GM12878 (cell line): ENCODE measurements at regions of chr13 and their contacts with region 1.

Region 1: GRCh38 chr13:102460801-102461200 is 59.0 kb upstream of the FGF14 start:
- DNase-seq: no peak
- ATAC-seq: no peak
- H3K4me3 ChIP-seq: no peak overlapping the region
- H3K27ac ChIP-seq: no peak overlapping the region
- H3K4me1 ChIP-seq: no peaks in the 10 kb centered on the region
- H3K27me3 ChIP-seq: no peaks in the 10 kb centered on the region
- CTCF ChIP-seq: no peak
- EP300 ChIP-seq: no peak
- POLR2A ChIP-seq: no peak
- RAD21 ChIP-seq: no peak

Region 2: GRCh38 chr13:101942038-101942437 is 518.8 kb before region 1 on chr13:
- CTCF ChIA-PET with region 1: interaction called, 18 read pairs
- POLR2A ChIA-PET with region 1: no interaction called
- RAD21 ChIA-PET with region 1: interaction called, 5 read pairs
- SMC1A ChIA-PET with region 1: interaction called, 5 read pairs
- in situ Hi-C with region 1: loop called (anchors 10 kb)
- intact Hi-C with region 1: loop called (anchors 1 kb)
- DNase-seq: no peak
- ATAC-seq: peak; percentile 78
- H3K4me3 ChIP-seq: no peak overlapping the region
- H3K27ac ChIP-seq: no peak overlapping the region
- H3K4me1 ChIP-seq: no peaks in the 10 kb centered on the region
- H3K27me3 ChIP-seq: no peaks in the 10 kb centered on the region
- CTCF ChIP-seq: peak; percentile 62 to 63 (median 63)
- EP300 ChIP-seq: no peak
- POLR2A ChIP-seq: no peak
- RAD21 ChIP-seq: peak; percentile 72

Region 3: DNA sequence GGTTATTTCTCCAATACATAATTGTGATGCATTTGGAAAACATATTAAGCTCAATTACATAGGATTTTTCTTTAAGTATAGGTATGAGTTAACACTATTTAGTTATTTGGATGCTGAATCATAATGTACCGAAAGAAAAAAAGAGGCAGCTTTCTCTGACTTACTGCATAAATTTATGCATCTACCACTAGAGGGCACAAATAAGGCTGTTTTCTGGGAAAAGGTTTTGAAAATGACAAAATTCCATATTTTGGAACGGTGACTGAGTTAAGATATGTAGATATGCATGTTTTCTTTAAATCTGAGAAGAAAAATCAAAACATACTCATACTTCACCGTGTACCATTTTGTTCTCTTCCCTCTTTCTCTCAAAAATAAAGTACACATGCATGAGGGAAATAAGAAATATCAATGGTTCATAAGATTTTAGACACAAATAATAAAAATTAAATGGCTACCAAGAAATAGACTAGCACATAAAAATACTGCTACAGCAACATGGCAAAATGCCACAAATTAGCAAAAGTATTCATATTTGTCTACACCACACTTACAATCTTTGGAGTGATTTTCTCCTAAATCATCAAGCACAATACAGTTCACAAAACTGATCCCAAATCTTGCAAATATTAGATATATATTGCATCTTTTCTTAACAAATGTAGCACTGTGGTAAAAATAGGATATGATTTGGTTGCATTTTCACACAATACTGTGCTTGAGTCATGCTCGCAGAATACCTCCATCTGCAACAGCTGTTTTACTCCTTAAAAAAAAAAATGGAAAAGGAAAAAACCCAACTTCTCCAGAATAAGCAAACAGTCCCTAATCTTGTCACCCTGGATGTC is 319.0 kb before region 1 on chr13:
- CTCF ChIA-PET with region 1: interaction called, 33 read pairs
- POLR2A ChIA-PET with region 1: no interaction called
- RAD21 ChIA-PET with region 1: interaction called, 6 read pairs
- SMC1A ChIA-PET with region 1: interaction called, 5 read pairs
- in situ Hi-C with region 1: loop called (anchors 25 kb)
- intact Hi-C with region 1: loop called (anchors 1 kb)
- DNase-seq: no peak
- ATAC-seq: peak; percentile 45; the same call in 2 of the 3 replicates
- H3K4me3 ChIP-seq: no peak overlapping the region
- H3K27ac ChIP-seq: no peak overlapping the region
- H3K4me1 ChIP-seq: no peaks in the 10 kb centered on the region
- H3K27me3 ChIP-seq: no peaks in the 10 kb centered on the region
- CTCF ChIP-seq: peak; percentile 52 to 63 (median 55)
- EP300 ChIP-seq: no peak
- POLR2A ChIP-seq: no peak
- RAD21 ChIP-seq: peak; percentile 39

Region 4: DNA sequence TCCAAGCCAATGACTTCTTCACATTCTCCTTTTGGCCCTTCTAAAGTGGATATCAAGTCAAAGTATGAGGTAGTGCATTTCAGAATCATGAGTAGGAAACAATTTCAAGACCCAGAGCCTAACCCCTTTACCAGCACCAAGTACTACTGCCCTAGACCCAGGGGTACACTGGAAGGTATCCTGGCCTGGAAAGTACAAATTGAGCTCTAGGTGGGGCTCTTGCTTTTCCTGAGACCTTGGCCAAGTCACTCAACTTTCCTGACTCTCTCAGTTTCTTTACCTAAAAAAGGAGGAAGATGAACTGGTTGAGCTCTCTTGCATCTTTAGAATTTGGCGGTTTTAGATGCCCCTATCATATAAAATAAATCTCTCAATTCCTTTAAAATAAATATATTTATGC is 263.6 kb before region 1 on chr13:
- CTCF ChIA-PET with region 1: interaction called, 5 read pairs
- POLR2A ChIA-PET with region 1: no interaction called
- RAD21 ChIA-PET with region 1: interaction called, 4 read pairs
- SMC1A ChIA-PET with region 1: interaction called, 3 read pairs
- in situ Hi-C with region 1: no loop called
- intact Hi-C with region 1: loop called (anchors 2 kb)
- DNase-seq: no peak
- ATAC-seq: peak; percentile 52; the same call in 1 of the 3 replicates
- H3K4me3 ChIP-seq: no peak overlapping the region
- H3K27ac ChIP-seq: no peak overlapping the region
- H3K4me1 ChIP-seq: no peaks in the 10 kb centered on the region
- H3K27me3 ChIP-seq: no peaks in the 10 kb centered on the region
- CTCF ChIP-seq: peak in 2 of 3 experiments; percentile 9 to 15; a peak in 1 of 6 replicates
- EP300 ChIP-seq: no peak
- POLR2A ChIP-seq: no peak
- RAD21 ChIP-seq: 0 out of 2 replicates have a peak, but pooled peaks have one; percentile 32

Region 5: GRCh38 chr13:102234618-102235017 is 226.2 kb before region 1 on chr13:
- CTCF ChIA-PET with region 1: no interaction called
- POLR2A ChIA-PET with region 1: no interaction called
- RAD21 ChIA-PET with region 1: no interaction called
- SMC1A ChIA-PET with region 1: no interaction called
- in situ Hi-C with region 1: loop called (anchors 5 kb)
- intact Hi-C with region 1: no loop called
- DNase-seq: no peak
- ATAC-seq: no peak
- H3K4me3 ChIP-seq: no peak overlapping the region
- H3K27ac ChIP-seq: no peak overlapping the region
- H3K4me1 ChIP-seq: no peaks in the 10 kb centered on the region
- H3K27me3 ChIP-seq: no peaks in the 10 kb centered on the region; a peak in 1 of 4 replicates
- CTCF ChIP-seq: no peak
- EP300 ChIP-seq: no peak
- POLR2A ChIP-seq: no peak
- RAD21 ChIP-seq: no peak

Region 6: DNA sequence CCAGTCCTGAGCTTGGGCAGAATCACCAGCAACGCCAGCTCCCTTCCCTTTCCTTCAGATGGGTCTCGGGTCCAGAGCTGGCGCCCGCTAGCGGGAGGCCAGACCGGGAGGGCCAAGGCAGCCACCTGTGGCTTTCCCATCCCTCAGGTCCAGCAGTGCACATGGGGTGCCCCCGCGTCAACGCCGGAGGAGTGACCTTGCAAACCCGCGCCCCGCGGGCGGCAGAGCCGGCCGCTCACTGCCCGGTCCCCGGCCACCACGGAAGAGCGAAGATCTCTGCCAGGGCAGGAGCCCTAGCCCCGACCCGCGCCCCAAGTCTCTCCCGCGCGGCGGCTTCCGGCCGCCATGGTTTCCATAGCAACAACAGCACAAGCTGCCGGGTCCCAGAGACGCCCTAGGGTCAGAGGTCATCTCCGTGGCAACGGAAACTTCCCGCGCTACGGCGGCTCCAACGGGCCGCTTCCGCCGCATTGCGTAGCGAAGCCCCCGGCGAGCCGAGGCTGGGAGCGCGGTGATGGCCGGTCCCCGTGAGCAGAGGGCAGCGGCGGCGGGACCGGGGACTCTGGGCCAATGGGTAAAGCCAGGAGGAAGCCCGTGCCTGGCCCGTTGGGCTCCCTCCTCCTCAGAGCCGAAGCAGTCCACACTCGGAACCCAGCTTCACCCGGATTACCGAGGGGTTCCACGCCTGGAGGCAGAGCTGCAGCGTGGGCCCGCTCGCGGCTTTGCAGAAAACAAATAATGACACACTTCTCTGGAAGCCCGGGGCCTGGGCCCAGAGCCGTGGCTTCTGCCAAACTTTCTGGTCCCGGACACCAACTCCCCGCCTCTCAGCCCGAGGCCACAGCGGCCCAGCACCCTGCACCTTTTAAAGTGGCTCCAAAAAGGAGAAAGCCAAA is 66.4 kb before region 1 on chr13:
- CTCF ChIA-PET with region 1: interaction called, 4 read pairs
- POLR2A ChIA-PET with region 1: no interaction called
- RAD21 ChIA-PET with region 1: interaction called, 5 read pairs
- SMC1A ChIA-PET with region 1: no interaction called
- in situ Hi-C with region 1: no loop called
- intact Hi-C with region 1: loop called (anchors 5 kb)
- DNase-seq: peak; percentile 47
- ATAC-seq: peak; percentile 94
- H3K4me3 ChIP-seq: peak overlapping the region; percentile 81
- H3K27ac ChIP-seq: peak overlapping the region; percentile 62
- H3K4me1 ChIP-seq: no peaks in the 10 kb centered on the region; the same call in 1 of the 2 replicates
- H3K27me3 ChIP-seq: peaks cover 0 to 5% of the 10 kb centered on the region in 2 experiments; a peak in 3 of 4 replicates
- CTCF ChIP-seq: peak; percentile 6 to 22 (median 11); a peak in 1 of 6 replicates
- EP300 ChIP-seq: no peak
- POLR2A ChIP-seq: peak; percentile 77
- RAD21 ChIP-seq: no peak

Region 7: DNA sequence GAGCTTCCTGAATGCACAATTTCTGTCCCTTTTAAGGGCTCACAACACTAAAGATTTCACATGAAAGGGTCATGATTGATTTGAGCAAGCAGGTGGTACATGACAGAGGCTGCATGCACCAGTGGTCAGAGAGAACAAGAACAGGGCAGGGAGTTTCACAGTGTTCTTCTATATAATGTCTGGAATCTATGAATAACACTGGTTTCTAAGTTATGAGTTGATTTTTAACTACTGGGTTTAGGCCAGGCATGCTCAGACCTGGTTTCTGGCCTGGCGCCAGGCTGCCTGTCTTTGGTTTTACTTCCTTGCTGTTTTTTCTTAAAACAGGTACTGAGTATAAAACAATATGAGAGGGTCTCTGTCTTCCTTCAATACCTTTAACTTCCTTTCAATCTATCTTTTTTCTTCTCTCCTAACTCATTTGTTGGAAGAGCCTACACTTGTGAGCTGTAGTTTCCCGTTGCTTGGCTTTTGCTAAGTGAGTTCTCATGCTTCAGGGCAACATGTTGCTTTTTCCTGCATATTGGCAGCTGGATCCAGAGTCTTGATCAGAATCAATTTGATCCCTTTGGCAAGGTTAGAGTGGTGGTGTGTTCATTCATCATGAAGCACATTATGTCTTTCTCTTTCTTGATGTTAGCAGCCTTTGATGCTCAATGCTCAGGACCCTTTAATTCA is 20.4 kb before region 1 on chr13:
- CTCF ChIA-PET with region 1: interaction called, 10 read pairs
- POLR2A ChIA-PET with region 1: no interaction called
- RAD21 ChIA-PET with region 1: interaction called, 3 read pairs
- SMC1A ChIA-PET with region 1: interaction called, 10 read pairs
- in situ Hi-C with region 1: no loop called
- intact Hi-C with region 1: no loop called
- DNase-seq: peak; percentile 52
- ATAC-seq: peak; percentile 81
- H3K4me3 ChIP-seq: no peak overlapping the region
- H3K27ac ChIP-seq: no peak overlapping the region
- H3K4me1 ChIP-seq: no peaks in the 10 kb centered on the region
- H3K27me3 ChIP-seq: no peaks in the 10 kb centered on the region
- CTCF ChIP-seq: no peak
- EP300 ChIP-seq: no peak
- POLR2A ChIP-seq: no peak
- RAD21 ChIP-seq: no peak